ENCODE measurements at regions of chr2 and their contacts with region 1.

Region 1: GRCh38 chr2:241096979-241097378 is 5.1 kb downstream of the MTERF4 start:
- DNase-seq: no peak
- ATAC-seq: no peak
- H3K4me3 ChIP-seq: no peak overlapping the region
- H3K4me3 Mint-ChIP-seq: peak overlapping the region in 4 of 10 donors; percentile 54 to 94 (median 62)
- H3K27ac ChIP-seq: no peak overlapping the region
- H3K27ac Mint-ChIP-seq: peak overlapping the region in 8 of 9 donors; percentile 45 to 99 (median 92)
- H3K4me1 ChIP-seq: peaks cover 35 to 58% of the 10 kb centered on the region in 2 donors
- H3K4me1 Mint-ChIP-seq: peaks cover 42 to 85% (median 79%) of the 10 kb centered on the region in 7 donors
- H3K27me3 ChIP-seq: no peaks in the 10 kb centered on the region
- H3K27me3 Mint-ChIP-seq: no peaks in the 10 kb centered on the region

Region 2: GRCh38 chr2:240906141-240906910 is 190.7 kb before region 1 on chr2 and contains the start of gene CROCC2:
- CTCF ChIA-PET with region 1: no interaction called
- POLR2A ChIA-PET with region 1: no interaction called
- intact Hi-C with region 1: no loop called
- DNase-seq: no peak
- ATAC-seq: no peak
- H3K4me3 ChIP-seq: no peak within 1 kb of the TSS
- H3K4me3 Mint-ChIP-seq: no peak within 1 kb of the TSS
- H3K27ac ChIP-seq: no peak within 1 kb of the TSS
- H3K27ac Mint-ChIP-seq: no peak within 1 kb of the TSS
- H3K4me1 ChIP-seq: no peaks in the 10 kb centered on the region
- H3K4me1 Mint-ChIP-seq: no peaks in the 10 kb centered on the region
- H3K27me3 ChIP-seq: no peaks in the 10 kb centered on the region
- H3K27me3 Mint-ChIP-seq: no peaks in the 10 kb centered on the region
- total RNA-seq, gene CROCC2: 0.22 TPM in 1 of 5 experiments, not detected in the others

Region 3: DNA sequence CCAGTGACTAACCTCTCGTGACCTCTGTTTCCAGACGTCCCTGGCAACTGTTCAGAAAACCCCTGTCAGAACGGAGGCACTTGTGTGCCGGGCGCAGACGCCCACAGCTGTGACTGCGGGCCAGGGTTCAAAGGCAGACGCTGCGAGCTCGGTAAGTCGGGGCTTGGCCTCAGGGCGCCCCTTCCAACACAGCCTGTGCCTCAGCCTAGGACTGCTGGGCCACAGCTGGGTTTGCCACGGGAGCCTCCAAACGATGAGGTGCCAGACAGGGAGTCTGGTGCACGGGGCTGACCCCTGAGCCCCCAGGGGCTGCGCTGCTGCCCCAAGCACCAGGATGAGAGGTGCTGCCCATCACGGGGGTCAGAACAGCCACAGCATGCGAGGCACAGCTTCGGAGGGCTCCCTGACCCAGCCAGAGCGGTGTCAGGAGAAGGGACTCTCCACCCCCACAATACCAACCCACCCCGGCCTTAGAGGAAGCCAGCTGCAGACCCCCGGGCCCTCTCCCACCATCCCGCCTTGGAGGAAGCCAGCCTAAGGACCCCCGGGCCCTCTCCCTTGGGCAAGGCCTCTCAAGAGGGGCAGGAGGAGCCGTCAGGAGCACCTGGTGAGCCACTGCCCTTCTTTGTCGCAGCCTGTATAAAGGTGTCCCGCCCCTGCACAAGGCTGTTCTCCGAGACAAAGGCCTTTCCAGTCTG is 15.2 kb before region 1 on chr2:
- CTCF ChIA-PET with region 1: interaction called, 7 read pairs
- POLR2A ChIA-PET with region 1: interaction called, 7 read pairs
- intact Hi-C with region 1: loop called in 1 of 2 experiments (anchors 1 kb)
- DNase-seq: no peak
- ATAC-seq: no peak
- H3K4me3 ChIP-seq: no peak overlapping the region
- H3K4me3 Mint-ChIP-seq: no peak overlapping the region
- H3K27ac ChIP-seq: no peak overlapping the region
- H3K27ac Mint-ChIP-seq: peak overlapping the region in 7 of 9 donors; percentile 65 to 89 (median 80)
- H3K4me1 ChIP-seq: no peaks in the 10 kb centered on the region
- H3K4me1 Mint-ChIP-seq: peaks cover 0 to 36% (median 28%) of the 10 kb centered on the region in 7 donors
- H3K27me3 ChIP-seq: no peaks in the 10 kb centered on the region
- H3K27me3 Mint-ChIP-seq: no peaks in the 10 kb centered on the region

Region 4: GRCh38 chr2:241110607-241111439 is 13.8 kb after region 1 on chr2:
- CTCF ChIA-PET with region 1: interaction called, 6 read pairs
- POLR2A ChIA-PET with region 1: interaction called, 145 read pairs
- intact Hi-C with region 1: loop called in 1 of 2 experiments (anchors 1 kb)
- DNase-seq: no peak
- ATAC-seq: peak; percentile 17
- H3K4me3 ChIP-seq: peak overlapping the region; percentile 56
- H3K4me3 Mint-ChIP-seq: peak overlapping the region; percentile 68 to 89 (median 82)
- H3K27ac ChIP-seq: peak overlapping the region; percentile 70
- H3K27ac Mint-ChIP-seq: peak overlapping the region; percentile 81 to 99 (median 98)
- H3K4me1 ChIP-seq: peaks cover 36 to 42% of the 10 kb centered on the region in 2 donors
- H3K4me1 Mint-ChIP-seq: peaks cover 22 to 64% (median 63%) of the 10 kb centered on the region in 7 donors
- H3K27me3 ChIP-seq: no peaks in the 10 kb centered on the region
- H3K27me3 Mint-ChIP-seq: no peaks in the 10 kb centered on the region

Region 5: DNA sequence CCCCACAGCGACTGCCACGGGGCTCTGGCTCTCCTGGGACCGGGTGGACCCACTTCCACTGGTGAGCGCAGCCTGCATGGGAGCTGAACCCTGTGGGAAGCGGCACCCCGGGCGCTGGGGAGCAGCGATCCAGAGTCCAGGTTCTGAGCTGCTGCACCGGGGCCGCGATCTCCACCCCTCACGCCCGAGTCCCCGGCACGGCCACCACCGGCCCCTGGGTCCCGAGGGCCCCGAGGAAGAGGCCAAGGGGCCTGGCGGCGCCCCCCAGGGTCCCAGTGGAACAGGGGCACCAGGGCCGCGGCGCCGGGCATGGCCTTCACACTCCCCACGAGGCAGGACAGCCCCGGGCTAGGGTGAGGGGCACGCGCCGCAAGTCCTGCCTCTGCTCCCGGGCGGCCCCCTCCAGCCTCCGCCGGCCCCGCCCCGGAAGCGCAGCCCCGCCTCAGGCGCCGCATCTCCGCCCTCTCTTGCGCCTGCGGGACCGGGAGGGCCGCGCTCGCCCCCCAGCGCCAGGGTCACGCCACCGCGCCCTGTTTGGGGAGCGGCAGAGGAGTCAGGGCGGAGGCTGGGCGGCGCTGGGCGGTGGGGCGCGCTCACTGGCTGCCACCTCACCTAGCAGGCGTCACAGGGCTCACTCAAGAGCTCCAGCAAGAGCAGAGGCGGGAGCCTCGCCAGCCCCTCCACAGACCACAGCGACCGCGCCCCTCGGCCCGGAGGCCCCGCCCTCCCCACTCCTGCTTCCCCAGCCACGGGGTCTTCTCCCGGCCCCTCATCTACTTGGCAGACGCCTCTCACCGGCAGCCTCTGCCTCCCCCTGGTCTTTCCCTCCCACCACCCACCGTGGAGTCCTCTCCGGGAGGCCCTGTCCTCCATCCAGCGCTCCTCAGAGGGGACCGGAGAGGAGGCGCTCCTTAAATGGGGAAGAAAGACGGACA is 513.1 kb after region 1 on chr2:
- CTCF ChIA-PET with region 1: no interaction called
- POLR2A ChIA-PET with region 1: no interaction called
- intact Hi-C with region 1: loop called in 1 of 2 experiments (anchors 10 kb)
- DNase-seq: peak; percentile 87 to 92 (median 90)
- ATAC-seq: peak; percentile 99
- H3K4me3 ChIP-seq: peak overlapping the region; percentile 53
- H3K4me3 Mint-ChIP-seq: peak overlapping the region in 9 of 10 donors; percentile 61 to 79 (median 71)
- H3K27ac ChIP-seq: peak overlapping the region; percentile 61
- H3K27ac Mint-ChIP-seq: peak overlapping the region; percentile 9 to 95 (median 68)
- H3K4me1 ChIP-seq: peaks cover 14 to 17% of the 10 kb centered on the region in 2 donors
- H3K4me1 Mint-ChIP-seq: peaks cover 16 to 33% (median 24%) of the 10 kb centered on the region in 7 donors
- H3K27me3 ChIP-seq: no peaks in the 10 kb centered on the region
- H3K27me3 Mint-ChIP-seq: no peaks in the 10 kb centered on the region

Measured in naive thymus-derived CD4-positive, alpha-beta T cell (primary cell).